Cardiac septum (tissue), 1 donor: ENCODE measurements at regions of chr3 and their contacts with region 1.

Region 1: GRCh38 chr3:50227390-50228183 is 8.4 kb upstream of the GNAI2 start:
- DNase-seq: peak; percentile 96

Region 2: DNA sequence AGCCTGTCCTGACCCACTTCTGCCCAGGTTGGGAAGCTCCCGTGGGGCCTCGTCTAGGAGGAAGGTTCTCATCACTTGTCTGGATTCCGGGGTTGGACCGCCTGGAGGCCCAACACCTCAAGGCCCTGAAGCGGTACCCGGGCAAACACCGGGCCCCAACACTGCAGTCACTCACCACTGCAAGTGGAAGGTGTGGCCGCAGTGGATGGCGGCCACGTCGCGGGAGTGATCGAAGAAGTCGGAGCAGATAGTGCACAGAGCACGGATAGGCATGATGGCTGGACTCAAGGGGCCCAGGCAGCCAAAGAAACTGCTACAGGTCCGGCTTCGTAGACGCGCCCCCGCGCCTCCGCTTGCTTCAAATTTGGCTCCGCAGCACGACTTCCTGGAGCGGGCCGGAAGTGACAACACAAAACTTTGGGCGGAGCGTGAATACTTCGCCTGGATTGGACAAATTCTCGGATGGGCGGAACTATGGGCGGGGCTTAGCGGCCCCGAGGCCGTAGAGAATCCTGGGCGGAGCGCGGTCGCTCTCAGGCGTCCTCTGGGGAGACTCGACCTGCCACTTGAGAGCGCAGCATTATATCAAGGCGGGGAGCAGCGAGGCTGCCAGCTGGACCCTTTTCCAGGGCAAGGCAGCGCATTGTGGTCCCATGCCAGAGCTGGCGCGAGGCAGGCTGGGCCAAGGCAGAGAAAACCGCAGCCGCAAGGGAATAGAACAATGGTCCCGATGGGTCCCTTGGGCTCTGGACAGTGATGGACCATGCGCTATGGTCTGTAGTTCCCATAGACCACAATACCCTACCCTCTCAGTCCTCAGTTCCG is 371.2 kb before region 1 on chr3 and contains the start of gene TRAIP:
- intact Hi-C with region 1: no loop called
- DNase-seq: peak; percentile 97
- total RNA-seq, gene TRAIP: 2.0 TPM

Region 3: GRCh38 chr3:50121416-50122032 is 106.1 kb before region 1 on chr3:
- intact Hi-C with region 1: loop called (anchors 2 kb)
- DNase-seq: no peak

Region 4: DNA sequence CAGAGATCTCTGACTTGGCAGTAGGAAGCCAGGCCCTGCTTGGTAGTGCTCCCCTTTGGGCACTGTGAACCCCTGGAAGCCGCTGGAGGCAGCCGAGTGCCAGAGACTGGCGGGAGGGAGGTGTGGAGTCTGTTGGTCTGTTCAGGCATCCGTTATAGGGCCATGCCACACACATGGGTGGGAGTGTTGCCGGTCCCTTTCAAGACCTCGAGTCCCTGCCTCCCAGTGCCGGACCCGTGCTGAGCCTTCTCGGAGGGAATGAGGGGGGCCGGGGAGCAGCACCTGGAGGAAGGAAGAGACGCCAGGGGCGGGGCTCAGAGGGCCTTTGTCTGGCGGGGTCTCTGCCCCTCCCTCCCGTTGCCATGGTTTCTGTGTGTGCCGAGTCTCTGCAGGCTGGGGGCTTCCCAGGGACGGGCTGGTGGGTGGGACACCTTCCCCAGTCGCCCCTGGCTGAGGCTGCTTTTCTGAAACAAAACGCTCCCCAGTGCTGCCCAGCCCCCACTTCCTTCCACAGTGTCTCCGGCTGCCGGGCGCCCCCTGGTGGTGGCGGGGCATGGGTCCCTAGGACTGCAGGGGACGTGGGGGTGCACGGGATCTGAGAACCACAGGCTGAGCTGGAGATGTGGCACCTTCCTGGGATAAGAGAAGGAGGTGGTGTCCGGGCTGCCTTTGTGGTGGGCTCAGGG is 18.4 kb after region 1 on chr3:
- intact Hi-C with region 1: loop called (anchors 1 kb)
- DNase-seq: peak; percentile 95

Region 5: GRCh38 chr3:50260027-50260941 is 32.7 kb after region 1 on chr3:
- intact Hi-C with region 1: loop called (anchors 1 kb)
- DNase-seq: peak; percentile 97

Region 6: GRCh38 chr3:50272911-50273693 is 45.5 kb after region 1 on chr3:
- intact Hi-C with region 1: loop called (anchors 1 kb)
- DNase-seq: peak; percentile 96